ENCODE measurements at regions of chr10 and their contacts with region 1.

Region 1: DNA sequence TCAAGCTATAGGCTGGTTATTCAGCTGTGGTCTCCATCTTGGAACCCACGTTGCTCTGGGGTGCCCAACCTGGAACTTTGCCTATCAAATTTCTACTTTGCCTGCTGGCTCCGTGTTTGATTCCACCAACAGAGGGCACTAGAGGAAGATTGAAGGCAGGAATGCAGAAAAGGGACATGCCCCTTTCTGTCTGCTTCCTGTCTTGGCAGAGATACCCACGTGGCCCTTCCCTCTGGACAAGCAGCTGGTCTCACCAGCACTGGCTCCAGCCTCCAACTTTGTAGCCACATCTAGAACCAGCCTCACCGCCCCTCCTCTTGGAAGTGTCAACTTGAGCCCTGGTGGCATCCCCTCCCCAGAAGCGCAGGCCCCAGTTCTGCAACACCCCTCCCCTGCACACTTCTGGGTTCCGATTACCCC is 52.1 kb upstream of the ZNF438 start:
- H3K4me3 ChIP-seq: no peak overlapping the region
- H3K27ac ChIP-seq: no peak overlapping the region
- H3K4me1 ChIP-seq: no peaks in the 10 kb centered on the region
- CTCF ChIP-seq: no peak

Region 2: DNA sequence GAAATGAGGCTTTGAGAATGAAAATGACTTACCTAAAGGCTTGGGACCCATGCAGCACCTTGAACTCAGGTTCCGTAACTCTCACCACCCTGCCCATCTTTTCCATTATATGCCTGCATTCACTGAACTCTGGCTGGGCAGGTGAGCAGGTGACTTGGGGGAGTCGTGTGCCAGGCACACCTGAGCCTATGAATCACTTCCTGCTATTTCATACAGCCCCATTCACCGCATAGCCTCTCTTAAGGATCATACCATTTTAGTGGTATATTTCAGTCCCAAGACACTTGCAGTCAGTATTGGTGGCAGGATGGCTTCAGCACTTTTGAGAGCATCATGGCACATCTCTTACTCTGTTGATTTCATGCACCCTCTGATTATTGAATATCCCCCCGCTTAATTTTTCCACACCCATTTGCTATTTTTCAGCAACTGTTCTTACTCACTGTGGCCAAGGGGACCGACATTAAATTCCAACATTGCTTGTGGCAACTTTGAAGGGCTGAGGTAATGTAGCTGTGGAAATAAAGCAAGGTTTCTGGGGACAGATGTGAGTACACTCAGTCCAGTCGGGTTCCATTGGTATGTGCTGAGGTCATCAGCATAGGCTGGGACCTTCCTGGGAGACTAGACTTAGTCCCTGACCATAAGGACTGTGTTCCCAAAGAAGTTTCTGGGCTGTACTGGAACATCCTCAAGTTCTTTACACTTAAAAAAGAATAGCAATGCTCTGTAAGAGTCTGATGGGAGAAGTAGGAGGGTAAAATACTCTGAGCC is 12.4 kb before region 1 on chr10:
- CTCF ChIA-PET with region 1: interaction called, 12 read pairs
- POLR2A ChIA-PET with region 1: no interaction called
- H3K4me3 ChIP-seq: no peak overlapping the region
- H3K27ac ChIP-seq: no peak overlapping the region
- H3K4me1 ChIP-seq: no peaks in the 10 kb centered on the region
- CTCF ChIP-seq: no peak

Measured in HEK293 (cell line).